K562 (cell line): ENCODE measurements at regions of chr6 and their contacts with region 1.

Region 1: DNA sequence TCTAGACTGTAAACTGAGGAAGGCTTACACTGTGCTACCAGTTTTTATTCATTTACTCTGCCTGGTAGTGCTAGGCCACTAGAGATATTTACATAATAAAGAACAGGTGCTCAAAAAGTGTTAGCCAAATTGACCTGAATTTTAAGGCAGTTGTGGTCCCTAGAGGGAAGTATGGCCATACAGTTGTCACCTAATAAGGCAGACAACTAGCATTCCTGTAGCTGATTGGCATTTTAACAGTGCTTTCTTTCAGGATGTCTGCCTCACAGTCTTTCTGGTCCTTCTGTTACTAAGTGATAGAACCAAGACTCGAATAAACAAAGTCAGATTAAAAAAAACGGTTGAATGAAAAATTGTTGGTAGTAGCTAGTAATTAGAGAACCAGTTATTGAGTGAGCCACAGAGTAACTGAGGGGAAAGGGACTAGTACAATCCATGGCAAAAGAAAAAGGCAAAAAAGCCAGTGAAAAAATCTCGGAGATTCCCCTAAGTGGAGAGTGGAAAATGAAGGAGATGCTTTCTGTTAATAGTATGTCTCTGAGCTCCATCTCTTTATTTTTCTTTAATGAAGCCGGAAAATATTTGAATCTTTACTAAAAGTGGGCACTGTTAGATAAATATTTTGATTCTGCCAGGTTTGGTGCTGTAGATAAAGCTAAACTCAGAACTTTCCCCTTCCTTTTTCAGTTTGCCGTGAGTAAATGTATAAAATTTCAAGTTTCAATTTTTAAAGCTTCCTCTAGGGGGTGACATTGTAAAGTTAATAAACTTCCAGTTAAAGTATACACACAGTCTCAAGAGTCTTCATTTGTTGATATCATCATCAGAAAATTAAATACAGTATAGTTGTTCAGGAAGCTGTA is 9.1 kb downstream of the VTA1 start:
- DNase-seq: peak; percentile 21 to 35 (median 29)
- ATAC-seq: peak; percentile 87
- H3K4me3 ChIP-seq: no peak overlapping the region
- H3K27ac ChIP-seq: no peak overlapping the region
- H3K4me1 ChIP-seq: peaks cover 0 to 3% of the 10 kb centered on the region in 2 experiments; a peak in 1 of 5 replicates
- H3K27me3 ChIP-seq: no peaks in the 10 kb centered on the region
- CTCF ChIP-seq: peak in 1 of 3 experiments; percentile 63; a peak in 2 of 6 replicates
- EP300 ChIP-seq: no peak
- POLR2A ChIP-seq: no peak
- RAD21 ChIP-seq: peak; percentile 31 to 43

Region 2: DNA sequence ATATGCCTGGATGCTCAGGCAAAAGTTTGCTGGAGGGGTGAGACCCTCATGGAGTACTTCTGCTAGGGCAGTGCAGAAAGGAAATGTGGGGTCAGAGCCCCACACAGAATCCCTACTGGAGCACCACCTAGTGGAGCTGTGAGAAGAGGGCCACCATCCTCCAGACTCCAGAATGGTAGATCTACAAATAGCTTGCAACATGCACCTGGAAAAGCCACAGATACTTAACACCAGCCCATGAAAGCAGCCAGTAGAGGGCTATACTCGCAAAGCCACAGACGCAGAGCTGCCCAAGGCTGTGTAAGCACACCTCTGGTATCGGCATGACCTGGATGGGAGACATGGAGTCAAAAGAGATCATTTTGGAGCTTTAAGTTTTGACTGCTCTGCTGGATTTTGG is 84.1 kb before region 1 on chr6:
- CTCF ChIA-PET with region 1: no interaction called
- POLR2A ChIA-PET with region 1: no interaction called
- in situ Hi-C with region 1: no loop called
- intact Hi-C with region 1: no loop called
- DNase-seq: peak in 1 of 4 experiments; percentile 12
- ATAC-seq: peak; percentile 81
- H3K4me3 ChIP-seq: no peak overlapping the region
- H3K27ac ChIP-seq: no peak overlapping the region
- H3K4me1 ChIP-seq: no peaks in the 10 kb centered on the region
- H3K27me3 ChIP-seq: no peaks in the 10 kb centered on the region
- CTCF ChIP-seq: peak; percentile 8 to 31 (median 22); a peak in 2 of 6 replicates
- EP300 ChIP-seq: no peak
- POLR2A ChIP-seq: no peak
- RAD21 ChIP-seq: peak in 1 of 2 experiments; percentile 39; a peak in 2 of 4 replicates

Region 3: DNA sequence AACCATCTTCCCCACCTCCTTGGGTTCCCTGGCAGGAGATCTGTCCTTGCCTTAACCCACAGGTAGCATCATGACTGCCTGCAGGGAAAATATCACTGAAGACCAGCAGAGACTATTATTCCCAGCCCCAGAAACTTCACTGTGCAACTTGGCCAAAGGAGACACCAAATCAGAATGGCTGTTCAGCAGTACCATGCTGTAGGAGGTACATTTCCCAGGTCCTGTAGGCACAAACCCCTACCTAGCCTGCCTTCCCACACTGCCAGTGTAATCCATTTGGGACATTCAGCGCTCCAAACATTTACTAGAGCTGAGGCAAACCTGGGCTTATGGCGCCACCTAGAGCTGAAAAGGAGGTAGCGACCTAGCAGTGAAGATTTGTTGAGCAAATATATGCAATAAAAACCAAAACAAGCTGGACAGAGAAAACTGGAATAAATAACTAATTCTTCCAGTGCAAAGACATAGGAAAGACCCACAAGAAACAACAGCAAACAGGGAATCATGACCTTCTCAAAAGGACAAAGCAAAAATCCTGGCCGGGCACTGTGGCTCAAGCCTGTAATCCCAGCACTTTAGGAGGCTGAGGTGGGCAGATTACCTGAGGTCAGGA is 51.2 kb after region 1 on chr6:
- CTCF ChIA-PET with region 1: no interaction called
- POLR2A ChIA-PET with region 1: interaction called, 3 read pairs
- in situ Hi-C with region 1: no loop called
- intact Hi-C with region 1: loop called (anchors 1 kb)
- DNase-seq: peak; percentile 42 to 68 (median 50)
- ATAC-seq: peak; percentile 96
- H3K4me3 ChIP-seq: no peak overlapping the region
- H3K27ac ChIP-seq: no peak overlapping the region
- H3K4me1 ChIP-seq: no peaks in the 10 kb centered on the region
- H3K27me3 ChIP-seq: no peaks in the 10 kb centered on the region
- CTCF ChIP-seq: peak; percentile 76 to 80 (median 78)
- EP300 ChIP-seq: no peak
- POLR2A ChIP-seq: no peak
- RAD21 ChIP-seq: peak in 1 of 2 experiments; percentile 70; a peak in 2 of 4 replicates

Region 4: GRCh38 chr6:142387997-142388815 is 232.1 kb after region 1 on chr6:
- CTCF ChIA-PET with region 1: no interaction called
- POLR2A ChIA-PET with region 1: no interaction called
- in situ Hi-C with region 1: no loop called
- intact Hi-C with region 1: loop called (anchors 1 kb)
- DNase-seq: peak in 2 of 4 experiments; percentile 21 to 24
- ATAC-seq: peak; percentile 68; the same call in 2 of the 3 replicates
- H3K4me3 ChIP-seq: no peak overlapping the region
- H3K27ac ChIP-seq: no peak overlapping the region
- H3K4me1 ChIP-seq: no peaks in the 10 kb centered on the region
- H3K27me3 ChIP-seq: no peaks in the 10 kb centered on the region
- CTCF ChIP-seq: peak in 2 of 3 experiments; percentile 27 to 49; a peak in 3 of 6 replicates
- EP300 ChIP-seq: no peak
- POLR2A ChIP-seq: no peak
- RAD21 ChIP-seq: peak; percentile 43 to 68